Activated naive CD4-positive, alpha-beta T cell treated with anti-CD3 and anti-CD28 coated beads for 36 hours (primary cell): ENCODE measurements at regions of chr3 and their contacts with region 1.

Region 1: GRCh38 chr3:125055913-125056745 is at the start of gene HEG1:
- DNase-seq: peak; percentile 78
- H3K4me3 Mint-ChIP-seq: peak within 1 kb of the TSS; percentile 80
- H3K27ac Mint-ChIP-seq: peak within 1 kb of the TSS; percentile 11
- H3K4me1 Mint-ChIP-seq: peaks cover 44% of the 10 kb centered on the region
- H3K27me3 Mint-ChIP-seq: no peaks in the 10 kb centered on the region
- total RNA-seq, gene HEG1: 5.8 TPM

Region 2: DNA sequence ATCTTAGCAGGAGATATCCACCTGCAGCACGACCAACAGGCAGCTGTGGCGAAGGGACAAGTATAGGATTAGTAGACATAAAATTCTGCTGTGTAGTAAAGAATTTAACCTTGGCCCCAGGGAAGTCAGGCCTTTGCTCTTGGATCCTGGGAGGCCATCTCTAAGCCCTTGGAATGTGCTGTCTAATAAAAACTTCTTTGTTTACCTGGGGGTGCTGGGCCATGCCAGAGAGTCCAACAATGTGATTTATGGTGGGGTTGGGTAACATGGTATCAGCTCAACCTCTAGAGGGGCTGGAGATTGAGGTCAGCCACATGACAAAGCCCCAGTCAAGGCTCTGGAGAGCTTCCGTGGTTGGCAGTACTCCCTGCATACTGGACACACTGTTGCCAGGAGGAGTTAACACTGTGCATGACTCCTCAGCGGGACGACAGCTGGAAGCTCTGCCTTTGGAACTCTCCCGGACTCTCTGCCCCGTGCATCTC is 52.7 kb before region 1 on chr3:
- CTCF ChIA-PET with region 1: no interaction called
- intact Hi-C with region 1: loop called (anchors 1 kb)
- DNase-seq: no peak
- H3K4me3 Mint-ChIP-seq: no peak overlapping the region
- H3K27ac Mint-ChIP-seq: no peak overlapping the region
- H3K4me1 Mint-ChIP-seq: peaks cover 35% of the 10 kb centered on the region
- H3K27me3 Mint-ChIP-seq: no peaks in the 10 kb centered on the region

Region 3: GRCh38 chr3:125110016-125110875 is 54.1 kb after region 1 on chr3:
- CTCF ChIA-PET with region 1: no interaction called
- intact Hi-C with region 1: loop called (anchors 1 kb)
- DNase-seq: no peak
- H3K4me3 Mint-ChIP-seq: no peak overlapping the region
- H3K27ac Mint-ChIP-seq: no peak overlapping the region
- H3K4me1 Mint-ChIP-seq: peaks cover 32% of the 10 kb centered on the region
- H3K27me3 Mint-ChIP-seq: peaks cover 8% of the 10 kb centered on the region

Region 4: GRCh38 chr3:125120379-125121122 is 64.4 kb after region 1 on chr3:
- CTCF ChIA-PET with region 1: no interaction called
- intact Hi-C with region 1: no loop called
- DNase-seq: no peak
- H3K4me3 Mint-ChIP-seq: no peak overlapping the region
- H3K27ac Mint-ChIP-seq: no peak overlapping the region
- H3K4me1 Mint-ChIP-seq: peaks cover 34% of the 10 kb centered on the region
- H3K27me3 Mint-ChIP-seq: no peaks in the 10 kb centered on the region

Region 5: DNA sequence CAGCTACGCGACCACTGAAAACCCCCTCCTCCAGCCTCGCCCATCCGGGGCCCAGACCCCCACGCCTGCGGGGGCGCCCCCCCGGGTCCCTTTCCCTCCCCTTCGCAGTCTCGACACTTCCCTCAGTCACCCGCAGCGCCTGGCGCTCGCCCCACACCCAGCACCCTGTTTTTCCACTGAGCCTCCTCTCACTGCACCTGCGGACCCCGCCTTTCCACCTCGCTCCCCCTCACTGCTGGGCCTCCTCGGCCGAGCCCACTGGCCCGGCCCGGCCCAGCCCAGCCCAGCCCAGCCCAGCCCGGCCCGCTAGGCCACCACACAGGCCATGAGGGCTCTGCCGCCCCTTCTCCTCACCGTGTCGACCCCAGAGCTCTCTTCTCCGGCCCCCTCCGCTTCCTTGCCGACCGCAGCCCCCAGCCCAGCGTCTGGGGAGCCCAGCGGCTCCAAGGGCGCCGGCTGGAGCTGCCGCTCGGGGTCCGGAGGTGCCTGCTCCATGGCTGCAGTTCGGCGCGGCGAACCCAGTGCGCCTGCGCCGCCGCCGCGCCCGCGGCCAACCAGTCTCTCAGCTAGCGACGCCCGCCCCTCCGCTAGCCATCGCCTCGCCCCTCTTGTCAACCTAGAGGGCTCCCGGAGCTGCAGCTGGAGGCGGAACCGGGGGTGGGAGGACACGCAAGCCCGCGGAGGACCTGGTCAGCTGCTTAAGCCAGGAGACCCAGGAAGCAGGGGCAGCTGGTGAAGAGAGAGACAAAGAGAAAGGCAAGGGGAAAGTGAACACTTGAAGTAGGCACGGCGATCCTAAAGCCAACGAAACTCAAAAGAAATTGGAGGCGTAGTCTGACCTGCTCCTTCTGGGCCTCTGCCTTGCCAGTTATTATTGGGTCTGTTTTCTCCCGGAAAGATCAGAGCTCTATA is 463.8 kb after region 1 on chr3 and contains the start of gene SNX4:
- CTCF ChIA-PET with region 1: no interaction called
- intact Hi-C with region 1: loop called (anchors 1 kb)
- DNase-seq: peak; percentile 89
- H3K4me3 Mint-ChIP-seq: peak within 1 kb of the TSS; percentile 91
- H3K27ac Mint-ChIP-seq: peak within 1 kb of the TSS; percentile 82
- H3K4me1 Mint-ChIP-seq: peaks cover 41% of the 10 kb centered on the region
- H3K27me3 Mint-ChIP-seq: no peaks in the 10 kb centered on the region
- total RNA-seq, gene SNX4: 24.8 to 27.8 TPM